ENCODE measurements at regions of chr20 and their contacts with region 1.

Region 1: DNA sequence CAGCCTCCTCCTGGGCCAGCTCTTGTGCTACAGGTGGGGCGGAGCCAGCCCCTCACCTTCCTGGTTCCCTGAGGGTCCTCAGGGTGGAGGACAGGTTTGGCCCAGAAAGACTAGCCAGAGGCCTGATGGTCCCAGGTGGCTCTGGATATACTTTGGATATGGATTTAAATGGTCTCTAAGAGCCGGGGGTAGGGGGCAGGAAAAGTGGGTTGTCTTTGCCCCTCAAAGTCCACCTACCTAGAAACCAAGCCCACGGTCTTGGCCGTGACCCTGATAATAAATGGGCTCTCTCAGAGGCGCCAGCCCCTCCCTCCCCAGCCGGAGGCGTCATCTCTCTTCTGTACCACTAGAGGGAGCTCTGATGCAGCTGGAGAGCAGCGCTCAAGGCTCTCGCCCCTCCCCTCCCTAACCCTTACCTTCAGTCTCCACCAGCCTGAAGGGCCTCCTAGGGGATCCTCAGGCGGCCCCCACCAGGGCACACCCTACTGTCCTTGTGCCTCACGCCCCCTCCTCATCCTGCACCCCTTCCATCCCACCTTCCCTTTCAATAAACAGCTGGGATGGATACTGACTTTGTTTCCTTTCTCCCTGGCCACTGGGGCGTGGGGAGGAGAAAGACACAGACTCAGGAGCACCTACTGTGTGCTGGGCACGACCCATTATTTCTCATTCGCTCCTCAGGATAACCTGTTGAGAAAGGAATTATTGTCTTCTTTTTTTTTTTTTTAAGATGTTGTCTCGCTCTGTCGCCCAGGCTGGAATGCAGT is 7.6 kb downstream of the NRSN2 start:
- DNase-seq: peak; percentile 70 to 92
- ATAC-seq: peak; percentile 99 to 100 (median 100)
- H3K4me3 ChIP-seq: no peak overlapping the region
- H3K4me3 Mint-ChIP-seq: no peak overlapping the region
- H3K27ac ChIP-seq: no peak overlapping the region
- H3K27ac Mint-ChIP-seq: no peak overlapping the region
- H3K4me1 ChIP-seq: peaks cover 7% of the 10 kb centered on the region
- H3K4me1 Mint-ChIP-seq: peaks cover 6 to 11% of the 10 kb centered on the region in 2 donors
- H3K27me3 ChIP-seq: no peaks in the 10 kb centered on the region
- H3K27me3 Mint-ChIP-seq: no peaks in the 10 kb centered on the region
- CTCF ChIP-seq: peak; percentile 85

Region 2: DNA sequence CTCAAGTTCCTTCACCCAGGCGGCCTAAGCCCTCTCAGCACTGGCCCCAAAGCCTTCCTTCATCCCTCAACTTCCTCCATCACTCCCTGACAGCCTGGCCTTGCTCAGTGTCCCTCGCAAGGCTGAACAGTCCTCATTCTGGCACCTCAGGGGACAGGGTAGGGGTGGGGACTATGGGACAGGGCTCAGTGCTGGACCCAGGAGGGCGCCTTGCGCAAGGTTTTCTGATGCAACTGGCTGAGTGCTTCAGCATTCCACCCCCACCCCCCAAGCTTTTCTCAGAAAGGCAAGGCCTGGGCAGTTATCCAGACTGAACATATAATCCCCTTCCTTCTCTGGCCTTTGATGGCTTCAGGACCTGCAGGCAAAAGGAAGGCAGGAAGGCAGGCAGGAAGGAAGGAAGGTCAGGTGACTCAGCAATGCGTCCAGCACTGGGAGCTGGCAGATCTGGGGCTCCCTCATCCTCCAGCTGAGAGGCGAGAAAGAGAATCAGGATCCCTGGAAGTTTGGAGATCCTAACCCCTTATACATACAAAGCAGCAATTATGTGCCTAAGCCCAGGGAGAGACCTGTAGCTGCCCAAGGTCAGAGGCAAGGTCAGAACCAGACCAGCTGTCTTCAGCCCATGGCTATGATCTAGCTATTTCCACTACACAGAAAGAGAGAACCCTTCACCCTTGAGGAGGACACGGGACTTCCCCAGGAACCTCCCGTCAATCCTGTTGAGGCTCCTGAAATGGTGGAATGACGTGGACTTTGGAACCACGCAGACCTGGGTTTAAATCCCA is 17.5 kb after region 1 on chr20:
- intact Hi-C with region 1: no loop called
- DNase-seq: no peak
- ATAC-seq: peak in 1 of 3 donors; percentile 64
- H3K4me3 ChIP-seq: no peak overlapping the region
- H3K4me3 Mint-ChIP-seq: no peak overlapping the region
- H3K27ac ChIP-seq: no peak overlapping the region
- H3K27ac Mint-ChIP-seq: no peak overlapping the region
- H3K4me1 ChIP-seq: peaks cover 4% of the 10 kb centered on the region
- H3K4me1 Mint-ChIP-seq: no peaks in the 10 kb centered on the region
- H3K27me3 ChIP-seq: no peaks in the 10 kb centered on the region
- H3K27me3 Mint-ChIP-seq: peaks cover 0 to 2% of the 10 kb centered on the region in 2 donors
- CTCF ChIP-seq: no peak

Region 3: GRCh38 chr20:407133-407952 is 52.9 kb after region 1 on chr20:
- intact Hi-C with region 1: loop called (anchors 10 kb)
- DNase-seq: peak in 1 of 2 donors; percentile 83
- ATAC-seq: peak; percentile 49 to 67 (median 58)
- H3K4me3 ChIP-seq: peak overlapping the region; percentile 36
- H3K4me3 Mint-ChIP-seq: peak overlapping the region; percentile 88
- H3K27ac ChIP-seq: peak overlapping the region; percentile 24
- H3K27ac Mint-ChIP-seq: peak overlapping the region; percentile 85 to 90
- H3K4me1 ChIP-seq: peaks cover 26% of the 10 kb centered on the region
- H3K4me1 Mint-ChIP-seq: peaks cover 30 to 36% of the 10 kb centered on the region in 2 donors
- H3K27me3 ChIP-seq: no peaks in the 10 kb centered on the region
- H3K27me3 Mint-ChIP-seq: no peaks in the 10 kb centered on the region
- CTCF ChIP-seq: peak; percentile 43

Region 4: DNA sequence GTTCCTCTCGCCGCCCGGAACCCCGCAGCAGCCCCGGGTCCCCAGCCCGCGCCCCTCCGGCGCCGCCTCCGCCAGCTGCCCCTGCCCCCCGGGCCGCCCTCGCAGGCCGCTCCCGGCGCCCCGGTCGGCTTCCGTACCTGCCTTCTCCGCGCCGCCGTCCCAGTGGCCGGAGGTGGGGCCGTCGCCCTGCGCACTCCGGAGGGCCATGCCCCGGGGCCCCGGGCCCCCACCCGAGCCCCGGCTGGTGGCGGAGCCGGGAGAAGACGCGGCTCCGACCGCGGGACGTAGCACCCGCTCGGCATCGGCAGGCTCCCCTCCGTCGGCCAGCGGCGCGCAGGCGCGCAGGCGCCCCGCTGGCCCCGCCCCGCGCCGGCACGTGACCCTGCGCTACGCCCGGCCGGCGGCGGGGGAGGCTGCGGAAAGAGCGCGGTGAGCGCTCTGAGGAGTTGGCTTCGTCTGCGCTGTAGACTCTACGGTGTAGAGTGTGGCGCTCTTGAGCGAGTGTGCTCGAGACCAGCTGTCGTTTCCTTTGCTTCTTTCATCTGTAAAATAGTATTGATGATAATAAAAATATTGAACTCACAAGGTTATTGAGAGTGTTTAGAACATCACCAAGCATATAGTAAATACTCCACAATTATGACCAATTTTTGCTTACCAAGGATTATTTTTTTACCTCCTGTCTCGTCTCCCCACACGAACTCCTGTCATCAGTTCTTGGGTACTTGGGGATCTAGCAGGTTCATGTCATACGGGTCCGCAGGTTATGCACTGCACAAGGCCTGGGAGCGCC is 107.9 kb after region 1 on chr20 and contains the start of gene TBC1D20:
- intact Hi-C with region 1: loop called (anchors 5 kb)
- DNase-seq: peak; percentile 85 to 96
- ATAC-seq: peak; percentile 93 to 99 (median 96)
- H3K4me3 ChIP-seq: peak within 1 kb of the TSS; percentile 81
- H3K4me3 Mint-ChIP-seq: peak within 1 kb of the TSS; percentile 97
- H3K27ac ChIP-seq: peak within 1 kb of the TSS; percentile 79
- H3K27ac Mint-ChIP-seq: peak within 1 kb of the TSS; percentile 90 to 92
- H3K4me1 ChIP-seq: peaks cover 18% of the 10 kb centered on the region
- H3K4me1 Mint-ChIP-seq: peaks cover 32 to 45% of the 10 kb centered on the region in 2 donors
- H3K27me3 ChIP-seq: no peaks in the 10 kb centered on the region
- H3K27me3 Mint-ChIP-seq: peaks cover 5 to 8% of the 10 kb centered on the region in 2 donors
- CTCF ChIP-seq: no peak
- total RNA-seq, gene TBC1D20: 32.5 to 47.6 (median 44.2) TPM

Region 5: DNA sequence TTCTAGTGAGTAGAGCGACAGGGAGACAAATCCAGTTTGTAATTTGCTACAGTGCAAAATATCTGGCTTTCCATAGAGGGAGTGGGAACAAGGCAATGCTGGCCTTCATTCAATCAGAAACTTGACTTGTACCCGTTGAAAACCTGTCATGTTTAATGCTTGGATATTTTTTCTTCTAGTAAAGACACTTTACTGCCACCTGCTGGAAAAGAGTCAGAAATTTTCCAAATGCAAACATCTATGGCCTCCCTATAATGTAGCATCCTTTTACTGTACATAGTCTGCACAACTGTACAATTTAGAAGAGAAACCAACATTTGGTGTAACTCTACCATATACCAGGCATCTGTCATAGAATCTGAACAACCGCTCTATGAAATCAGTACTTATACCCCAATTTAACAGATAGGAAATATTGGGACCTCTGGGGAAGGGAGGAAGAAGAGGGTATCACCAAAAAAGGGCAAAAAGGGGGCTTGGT is 124.5 kb after region 1 on chr20:
- intact Hi-C with region 1: loop called (anchors 1 kb)
- DNase-seq: peak in 1 of 2 donors; percentile 83
- ATAC-seq: peak; percentile 68 to 84 (median 69)
- H3K4me3 ChIP-seq: no peak overlapping the region
- H3K4me3 Mint-ChIP-seq: no peak overlapping the region
- H3K27ac ChIP-seq: no peak overlapping the region
- H3K27ac Mint-ChIP-seq: peak overlapping the region; percentile 4 to 55
- H3K4me1 ChIP-seq: peaks cover 3% of the 10 kb centered on the region
- H3K4me1 Mint-ChIP-seq: peaks cover 5 to 8% of the 10 kb centered on the region in 2 donors
- H3K27me3 ChIP-seq: no peaks in the 10 kb centered on the region
- H3K27me3 Mint-ChIP-seq: no peaks in the 10 kb centered on the region
- CTCF ChIP-seq: peak; percentile 64

Region 6: DNA sequence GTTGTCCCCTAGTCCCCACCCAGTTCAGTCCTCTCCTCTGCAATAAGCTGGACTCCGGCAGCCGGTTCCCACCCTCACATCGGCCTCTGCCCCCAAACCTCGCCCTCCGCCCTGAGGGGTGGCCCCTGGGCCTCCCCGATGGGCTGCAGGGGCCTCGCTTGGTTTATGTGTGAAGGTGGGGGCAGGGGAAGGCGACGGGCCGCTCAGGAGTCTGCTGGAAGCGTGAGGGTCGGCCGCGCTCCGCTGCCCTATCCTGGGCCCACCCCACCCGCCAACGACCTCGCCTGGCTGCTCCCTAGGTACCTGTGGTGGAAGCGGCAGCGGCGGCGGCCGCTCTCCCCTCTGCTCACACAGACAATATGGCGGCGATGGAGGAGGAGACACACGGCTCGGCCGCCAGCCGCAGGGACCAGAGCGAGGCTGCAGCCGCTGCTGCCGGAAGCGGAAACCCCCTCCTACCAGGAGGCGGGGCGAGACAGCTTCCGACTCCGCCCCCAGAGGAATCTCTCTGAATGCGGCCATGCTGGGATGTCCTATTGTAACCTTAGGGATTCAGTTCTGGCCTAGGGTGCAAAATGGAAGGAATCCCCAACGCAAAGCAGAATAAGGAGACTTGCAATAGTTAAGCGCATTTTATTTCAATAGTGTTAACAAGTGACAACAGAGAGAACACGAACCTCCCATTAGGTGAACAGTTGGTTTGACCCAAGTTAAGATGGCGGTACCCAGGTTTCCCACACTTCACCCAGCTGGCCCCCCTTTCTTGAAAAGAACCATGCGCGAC is 189.1 kb after region 1 on chr20 and contains the start of gene CSNK2A1:
- intact Hi-C with region 1: loop called (anchors 5 kb)
- DNase-seq: peak; percentile 97 to 98
- ATAC-seq: peak; percentile 90 to 97 (median 93)
- H3K4me3 ChIP-seq: peak within 1 kb of the TSS; percentile 90
- H3K4me3 Mint-ChIP-seq: peak within 1 kb of the TSS; percentile 87
- H3K27ac ChIP-seq: peak within 1 kb of the TSS; percentile 87
- H3K27ac Mint-ChIP-seq: peak within 1 kb of the TSS; percentile 95 to 100
- H3K4me1 ChIP-seq: peaks cover 19% of the 10 kb centered on the region
- H3K4me1 Mint-ChIP-seq: peaks cover 55 to 57% of the 10 kb centered on the region in 2 donors
- H3K27me3 ChIP-seq: no peaks in the 10 kb centered on the region
- H3K27me3 Mint-ChIP-seq: peaks cover 6 to 11% of the 10 kb centered on the region in 2 donors
- CTCF ChIP-seq: no peak
- total RNA-seq, gene CSNK2A1: 88.8 to 92.6 (median 88.9) TPM

Region 7: GRCh38 chr20:645318-646106 is 291.0 kb after region 1 on chr20:
- intact Hi-C with region 1: loop called (anchors 5 kb)
- DNase-seq: peak; percentile 70 to 80
- ATAC-seq: peak; percentile 82 to 89 (median 87)
- H3K4me3 ChIP-seq: no peak overlapping the region
- H3K4me3 Mint-ChIP-seq: no peak overlapping the region
- H3K27ac ChIP-seq: no peak overlapping the region
- H3K27ac Mint-ChIP-seq: no peak overlapping the region
- H3K4me1 ChIP-seq: peaks cover 13% of the 10 kb centered on the region
- H3K4me1 Mint-ChIP-seq: peaks cover 8 to 20% of the 10 kb centered on the region in 2 donors
- H3K27me3 ChIP-seq: peaks cover 5% of the 10 kb centered on the region
- H3K27me3 Mint-ChIP-seq: no peaks in the 10 kb centered on the region
- CTCF ChIP-seq: peak; percentile 99

Region 8: GRCh38 chr20:667391-667964 is 313.0 kb after region 1 on chr20:
- intact Hi-C with region 1: loop called (anchors 2 kb)
- DNase-seq: peak; percentile 65 to 70
- ATAC-seq: peak; percentile 53 to 63 (median 53)
- H3K4me3 ChIP-seq: no peak overlapping the region
- H3K4me3 Mint-ChIP-seq: no peak overlapping the region
- H3K27ac ChIP-seq: no peak overlapping the region
- H3K27ac Mint-ChIP-seq: no peak overlapping the region
- H3K4me1 ChIP-seq: no peaks in the 10 kb centered on the region
- H3K4me1 Mint-ChIP-seq: peaks cover 0 to 20% of the 10 kb centered on the region in 2 donors
- H3K27me3 ChIP-seq: peaks cover 18% of the 10 kb centered on the region
- H3K27me3 Mint-ChIP-seq: peaks cover 33 to 39% of the 10 kb centered on the region in 2 donors
- CTCF ChIP-seq: peak; percentile 71

Measured in natural killer cell (primary cell).